CD8-positive, alpha-beta T cell (primary cell): ENCODE measurements at regions of chr17 and their contacts with region 1.

Region 1: GRCh38 chr17:27303734-27304133 is 9.8 kb downstream of the WSB1 start:
- DNase-seq: no peak
- ATAC-seq: no peak
- H3K4me3 ChIP-seq: no peak overlapping the region
- H3K4me3 Mint-ChIP-seq: no peak overlapping the region
- H3K27ac ChIP-seq: no peak overlapping the region
- H3K27ac Mint-ChIP-seq: no peak overlapping the region
- H3K4me1 ChIP-seq: peaks cover 22% of the 10 kb centered on the region
- H3K4me1 Mint-ChIP-seq: peaks cover 47% of the 10 kb centered on the region
- H3K27me3 ChIP-seq: no peaks in the 10 kb centered on the region
- H3K27me3 Mint-ChIP-seq: no peaks in the 10 kb centered on the region
- CTCF ChIP-seq: no peak

Region 2: DNA sequence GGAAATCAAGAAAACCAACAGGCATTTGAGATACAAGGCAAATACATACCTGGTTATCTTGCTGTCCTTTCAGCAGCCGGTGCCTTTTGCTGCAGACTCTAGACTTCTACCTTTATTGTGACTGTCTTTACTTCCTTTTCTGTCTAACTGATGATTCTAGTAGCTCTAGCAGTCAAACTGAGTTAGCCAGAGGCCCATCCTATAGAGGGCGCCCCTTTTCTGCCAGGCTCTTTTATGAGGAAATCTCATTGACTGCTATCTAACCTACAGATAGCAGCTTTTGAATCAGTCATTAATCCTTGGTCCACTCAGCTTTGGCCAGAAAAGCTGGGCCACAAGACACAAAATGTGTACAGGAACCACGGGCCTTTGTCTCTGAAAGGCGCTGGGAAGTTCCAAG is 97.3 kb before region 1 on chr17:
- CTCF ChIA-PET with region 1: no interaction called
- POLR2A ChIA-PET with region 1: no interaction called
- intact Hi-C with region 1: no loop called
- DNase-seq: no peak
- ATAC-seq: no peak
- H3K4me3 ChIP-seq: no peak overlapping the region
- H3K4me3 Mint-ChIP-seq: no peak overlapping the region
- H3K27ac ChIP-seq: no peak overlapping the region
- H3K27ac Mint-ChIP-seq: no peak overlapping the region
- H3K4me1 ChIP-seq: no peaks in the 10 kb centered on the region
- H3K4me1 Mint-ChIP-seq: no peaks in the 10 kb centered on the region
- H3K27me3 ChIP-seq: no peaks in the 10 kb centered on the region
- H3K27me3 Mint-ChIP-seq: peaks cover 2% of the 10 kb centered on the region
- CTCF ChIP-seq: no peak

Region 3: GRCh38 chr17:27323524-27324206 is 19.9 kb after region 1 on chr17:
- CTCF ChIA-PET with region 1: no interaction called
- POLR2A ChIA-PET with region 1: interaction called, 3 read pairs
- intact Hi-C with region 1: loop called in 1 of 2 experiments (anchors 2 kb)
- DNase-seq: no peak
- ATAC-seq: no peak
- H3K4me3 ChIP-seq: no peak overlapping the region
- H3K4me3 Mint-ChIP-seq: no peak overlapping the region
- H3K27ac ChIP-seq: no peak overlapping the region
- H3K27ac Mint-ChIP-seq: no peak overlapping the region
- H3K4me1 ChIP-seq: no peaks in the 10 kb centered on the region
- H3K4me1 Mint-ChIP-seq: no peaks in the 10 kb centered on the region
- H3K27me3 ChIP-seq: no peaks in the 10 kb centered on the region
- H3K27me3 Mint-ChIP-seq: no peaks in the 10 kb centered on the region
- CTCF ChIP-seq: no peak

Region 4: DNA sequence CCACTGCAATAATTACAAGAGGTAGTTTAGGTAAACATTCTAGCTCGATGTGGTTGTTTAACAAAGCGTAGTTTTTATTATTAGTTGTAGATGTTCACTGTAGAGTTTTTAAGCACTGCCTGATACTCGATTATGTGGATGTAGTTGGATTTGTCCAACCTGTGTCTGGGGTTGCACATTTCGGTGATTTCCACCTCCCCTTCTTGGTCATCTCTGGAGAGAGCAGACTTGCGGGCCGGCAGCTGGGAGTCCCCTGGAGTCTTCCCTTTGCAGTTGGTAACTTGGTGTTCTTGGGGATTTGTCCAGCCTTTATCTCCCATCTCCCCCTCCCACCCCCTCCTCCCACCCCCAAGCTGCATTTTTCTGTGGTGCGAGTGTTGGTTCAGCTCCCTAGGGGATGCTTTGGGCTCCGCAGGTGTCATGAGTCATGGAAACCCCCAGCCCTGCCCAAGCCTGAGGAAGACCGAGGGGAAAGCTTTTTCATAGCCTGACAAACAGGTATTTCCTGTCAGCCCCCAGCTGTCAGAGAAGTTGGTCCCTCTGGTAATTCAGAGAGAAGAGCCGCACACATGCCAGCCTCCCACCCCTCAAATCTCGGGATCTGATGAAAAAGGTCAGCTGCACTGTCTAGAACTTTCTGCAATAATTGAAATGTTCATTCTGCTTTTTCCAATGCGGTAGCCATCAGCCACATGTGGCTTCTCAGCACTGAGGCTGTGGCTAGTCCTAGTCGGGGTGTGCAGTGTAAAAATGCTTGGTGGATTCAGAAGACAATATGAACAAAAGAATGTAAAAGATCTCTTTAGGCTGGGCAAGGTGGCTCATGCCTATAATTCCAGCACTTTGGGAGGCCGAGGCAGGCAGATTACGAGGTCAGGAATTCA is 202.9 kb after region 1 on chr17:
- CTCF ChIA-PET with region 1: no interaction called
- POLR2A ChIA-PET with region 1: no interaction called
- intact Hi-C with region 1: no loop called
- DNase-seq: no peak
- ATAC-seq: no peak
- H3K4me3 ChIP-seq: no peak overlapping the region
- H3K4me3 Mint-ChIP-seq: no peak overlapping the region
- H3K27ac ChIP-seq: no peak overlapping the region
- H3K27ac Mint-ChIP-seq: no peak overlapping the region
- H3K4me1 ChIP-seq: no peaks in the 10 kb centered on the region
- H3K4me1 Mint-ChIP-seq: peaks cover 7% of the 10 kb centered on the region
- H3K27me3 ChIP-seq: no peaks in the 10 kb centered on the region
- H3K27me3 Mint-ChIP-seq: no peaks in the 10 kb centered on the region
- CTCF ChIP-seq: no peak

Region 5: DNA sequence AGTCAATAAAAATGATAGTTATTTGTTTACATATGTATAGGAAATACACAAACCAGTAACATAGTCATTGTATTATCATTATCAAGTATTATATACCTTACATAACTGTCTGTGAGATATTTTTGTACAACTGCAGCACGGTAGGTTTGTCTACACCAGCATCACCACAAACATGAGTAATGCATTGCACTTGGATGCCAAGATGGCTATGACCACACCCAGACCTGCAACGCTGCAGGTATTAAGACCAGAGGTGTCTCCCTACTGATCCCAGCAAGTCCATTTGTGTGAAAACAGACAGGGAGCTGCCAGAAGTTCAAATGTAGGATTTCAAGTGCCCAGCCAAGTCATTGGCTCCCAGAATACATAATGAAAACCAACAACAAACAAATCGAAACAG is 530.8 kb after region 1 on chr17:
- CTCF ChIA-PET with region 1: no interaction called
- POLR2A ChIA-PET with region 1: no interaction called
- intact Hi-C with region 1: no loop called
- DNase-seq: no peak
- ATAC-seq: no peak
- H3K4me3 ChIP-seq: no peak overlapping the region
- H3K4me3 Mint-ChIP-seq: no peak overlapping the region
- H3K27ac ChIP-seq: no peak overlapping the region
- H3K27ac Mint-ChIP-seq: no peak overlapping the region
- H3K4me1 ChIP-seq: no peaks in the 10 kb centered on the region
- H3K4me1 Mint-ChIP-seq: no peaks in the 10 kb centered on the region
- H3K27me3 ChIP-seq: no peaks in the 10 kb centered on the region
- H3K27me3 Mint-ChIP-seq: no peaks in the 10 kb centered on the region
- CTCF ChIP-seq: no peak